Dendritic cell treated with granulocyte-macrophage colony-stimulating factor and Interleukin-4, amounts not matched to agents 40 ng/mL and 50 ng/mL, for 4 days (primary cell): ENCODE measurements at regions of chr10 and their contacts with region 1.

Region 1: DNA sequence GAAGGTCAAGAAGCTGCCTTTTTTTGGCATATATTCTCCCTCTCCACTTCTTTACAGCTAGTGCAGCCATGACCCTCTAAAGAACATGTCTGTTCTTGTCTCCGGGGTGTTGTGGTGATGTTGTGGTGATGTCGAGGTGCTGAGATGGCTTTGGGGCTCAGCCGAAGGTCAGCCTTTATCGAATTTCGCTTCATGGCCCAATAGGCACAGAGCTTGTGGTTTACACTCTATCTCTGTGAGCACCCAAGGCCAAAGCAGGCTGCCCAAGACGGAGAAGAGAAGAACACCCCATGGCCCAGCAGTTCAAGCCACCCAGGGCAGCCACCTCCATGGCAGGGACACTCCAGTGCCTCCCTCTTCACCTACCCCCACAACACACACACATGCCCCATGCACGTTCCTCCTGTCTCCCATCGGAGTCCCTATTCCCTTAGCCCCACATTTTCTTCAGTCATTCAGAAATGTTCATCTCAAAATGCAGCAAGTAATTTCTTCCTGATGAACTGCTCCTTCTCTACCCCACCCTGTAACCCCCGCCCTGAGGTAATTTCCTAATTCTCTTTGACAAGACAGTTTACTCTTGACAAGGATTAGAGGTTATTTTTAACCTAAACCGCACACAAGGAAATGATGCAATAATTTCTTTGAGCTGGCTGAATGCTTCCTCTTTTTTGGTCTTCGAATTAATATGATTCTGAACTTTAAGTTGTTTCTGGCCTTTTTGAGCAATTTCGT is 18.6 kb upstream of the ADRB1 start:
- H3K4me3 Mint-ChIP-seq: peak overlapping the region; percentile 39
- H3K27ac Mint-ChIP-seq: peak overlapping the region; percentile 37
- H3K4me1 Mint-ChIP-seq: peaks cover 68% of the 10 kb centered on the region
- H3K27me3 Mint-ChIP-seq: peaks cover 66% of the 10 kb centered on the region

Region 2: GRCh38 chr10:113993489-113993991 is 31.5 kb before region 1 on chr10:
- intact Hi-C with region 1: loop called (anchors 5 kb)
- H3K4me3 Mint-ChIP-seq: no peak overlapping the region
- H3K27ac Mint-ChIP-seq: no peak overlapping the region
- H3K4me1 Mint-ChIP-seq: peaks cover 56% of the 10 kb centered on the region
- H3K27me3 Mint-ChIP-seq: peaks cover 41% of the 10 kb centered on the region

Region 3: GRCh38 chr10:114073395-114074186 is 48.5 kb after region 1 on chr10:
- intact Hi-C with region 1: no loop called
- H3K4me3 Mint-ChIP-seq: no peak overlapping the region
- H3K27ac Mint-ChIP-seq: no peak overlapping the region
- H3K4me1 Mint-ChIP-seq: peaks cover 40% of the 10 kb centered on the region
- H3K27me3 Mint-ChIP-seq: peaks cover 47% of the 10 kb centered on the region